Activated CD4-positive, alpha-beta memory T cell treated with anti-CD3 and anti-CD28 coated beads, Interleukin-2, amount 10 ng/mL, durations not matched to agents 7 days and 5 days (primary cell): ENCODE measurements at regions of chr2 and their contacts with region 1.

Region 1: GRCh38 chr2:70984576-70985282 is 6.3 kb downstream of the ANKRD53 start:
- DNase-seq: peak; percentile 85
- H3K4me3 Mint-ChIP-seq: no peak overlapping the region
- H3K27ac Mint-ChIP-seq: no peak overlapping the region
- H3K4me1 Mint-ChIP-seq: peaks cover 7% of the 10 kb centered on the region
- H3K27me3 Mint-ChIP-seq: no peaks in the 10 kb centered on the region

Region 2: DNA sequence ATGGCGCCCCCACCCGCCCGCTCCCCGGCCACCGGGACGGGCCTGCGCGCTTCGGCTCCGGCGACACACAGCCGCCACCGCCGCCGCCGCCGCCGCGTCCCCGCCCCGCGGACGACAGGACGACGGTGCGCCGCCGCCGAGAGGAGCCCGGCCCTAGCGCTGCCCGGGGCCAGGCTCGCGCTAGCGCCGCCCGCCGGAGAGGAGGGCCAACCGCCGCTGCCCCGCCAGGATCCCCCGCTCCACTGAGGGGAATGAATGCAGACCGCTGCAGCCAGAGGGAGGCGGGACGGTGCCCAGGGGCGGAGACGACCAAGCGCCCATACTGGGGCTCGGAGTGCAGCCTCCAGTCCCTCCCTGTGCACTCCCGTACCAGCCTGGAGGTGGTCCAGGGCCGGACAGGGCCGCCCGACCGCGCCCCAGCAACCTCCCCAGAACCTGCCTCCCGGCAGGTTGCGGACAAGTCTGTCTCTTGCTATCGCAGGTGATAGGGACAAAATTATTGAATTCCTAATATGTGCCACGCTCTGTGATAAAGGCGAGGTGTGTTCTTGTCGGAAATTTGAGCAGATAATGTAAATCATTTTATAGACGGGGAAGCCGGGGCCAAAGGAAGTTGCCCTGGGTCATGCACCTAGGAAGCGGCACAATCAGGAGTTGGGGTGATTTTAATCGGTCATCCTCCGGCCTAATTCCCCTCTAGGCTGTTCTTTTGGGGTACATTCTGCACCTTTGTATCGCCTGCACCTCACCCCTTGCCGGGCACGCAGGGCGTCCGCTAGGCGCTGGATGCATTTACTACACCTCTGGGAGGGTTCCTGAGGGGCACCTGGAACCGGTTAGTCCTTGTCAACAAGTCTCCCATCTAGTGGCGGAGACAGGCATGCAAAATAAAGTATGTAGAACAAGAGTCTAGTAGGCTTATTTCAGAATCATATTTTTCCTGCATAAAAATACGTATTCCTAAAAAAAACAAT is 10.3 kb after region 1 on chr2 and contains the start of gene TEX261:
- CTCF ChIA-PET with region 1: interaction called, 26 read pairs
- POLR2A ChIA-PET with region 1: no interaction called
- DNase-seq: peak; percentile 91
- H3K4me3 Mint-ChIP-seq: peak within 1 kb of the TSS; percentile 89
- H3K27ac Mint-ChIP-seq: peak within 1 kb of the TSS; percentile 82
- H3K4me1 Mint-ChIP-seq: peaks cover 45% of the 10 kb centered on the region
- H3K27me3 Mint-ChIP-seq: no peaks in the 10 kb centered on the region
- total RNA-seq, gene TEX261: 34.8 to 35.8 TPM

Region 3: GRCh38 chr2:71000780-71001591 is 16.3 kb after region 1 on chr2:
- CTCF ChIA-PET with region 1: interaction called, 26 read pairs
- POLR2A ChIA-PET with region 1: interaction called, 6 read pairs
- DNase-seq: peak; percentile 83
- H3K4me3 Mint-ChIP-seq: peak overlapping the region; percentile 66
- H3K27ac Mint-ChIP-seq: peak overlapping the region; percentile 73
- H3K4me1 Mint-ChIP-seq: peaks cover 31% of the 10 kb centered on the region
- H3K27me3 Mint-ChIP-seq: no peaks in the 10 kb centered on the region

Region 4: GRCh38 chr2:71100195-71100964 is 115.7 kb after region 1 on chr2:
- CTCF ChIA-PET with region 1: no interaction called
- POLR2A ChIA-PET with region 1: no interaction called
- DNase-seq: peak; percentile 44
- H3K4me3 Mint-ChIP-seq: no peak overlapping the region
- H3K27ac Mint-ChIP-seq: no peak overlapping the region
- H3K4me1 Mint-ChIP-seq: no peaks in the 10 kb centered on the region
- H3K27me3 Mint-ChIP-seq: peaks cover 4% of the 10 kb centered on the region